Adrenal gland (tissue), 19 donors: ENCODE measurements at regions of chr9 and their contacts with region 1.

Region 1: DNA sequence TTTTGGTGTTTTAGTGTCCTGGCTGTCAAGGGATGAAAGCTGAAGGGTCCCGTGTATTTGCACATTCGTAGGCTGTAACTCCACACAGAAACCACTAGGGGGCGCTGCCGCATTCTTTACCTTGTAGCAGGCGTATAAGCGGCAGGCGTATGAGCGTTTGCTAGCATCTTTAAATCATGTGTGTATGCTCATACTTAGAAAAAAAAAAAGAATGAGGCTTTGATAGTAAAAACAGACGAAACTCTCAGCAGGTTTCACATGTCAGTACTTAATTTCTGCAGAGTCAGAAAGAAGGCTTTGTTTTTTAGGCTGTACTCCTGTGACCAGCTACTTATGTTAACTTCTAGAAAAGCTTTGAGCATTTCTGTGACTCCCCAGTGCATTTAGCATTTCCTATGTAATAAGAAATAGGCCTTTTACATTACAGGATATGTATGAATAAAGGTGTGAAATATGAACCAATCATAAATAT is 218.8 kb upstream of the ADAMTSL1 start:
- DNase-seq: peak; percentile 73 to 90 (median 80)
- H3K4me3 ChIP-seq: no peak overlapping the region
- H3K27ac ChIP-seq: no peak overlapping the region
- H3K4me1 ChIP-seq: peaks cover 0 to 11% of the 10 kb centered on the region in 2 donors
- H3K27me3 ChIP-seq: no peaks in the 10 kb centered on the region
- CTCF ChIP-seq: peak; percentile 88 to 98 (median 94)
- POLR2A ChIP-seq: no peak

Region 2: GRCh38 chr9:18442629-18443491 is 187.7 kb after region 1 on chr9:
- intact Hi-C with region 1: loop called in 1 of 2 experiments (anchors 10 kb)
- DNase-seq: peak; percentile 77 to 88 (median 83)
- H3K4me3 ChIP-seq: no peak overlapping the region
- H3K27ac ChIP-seq: no peak overlapping the region
- H3K4me1 ChIP-seq: peaks cover 10 to 24% of the 10 kb centered on the region in 2 donors
- H3K27me3 ChIP-seq: no peaks in the 10 kb centered on the region
- CTCF ChIP-seq: peak; percentile 80 to 95 (median 82)
- POLR2A ChIP-seq: no peak

Region 3: GRCh38 chr9:19018201-19018600 is 763.0 kb after region 1 on chr9:
- intact Hi-C with region 1: loop called (anchors 5 to 10 kb)
- DNase-seq: no peak
- H3K4me3 ChIP-seq: no peak overlapping the region
- H3K27ac ChIP-seq: no peak overlapping the region
- H3K4me1 ChIP-seq: no peaks in the 10 kb centered on the region
- H3K27me3 ChIP-seq: no peaks in the 10 kb centered on the region
- CTCF ChIP-seq: no peak
- POLR2A ChIP-seq: no peak